CD4-positive, alpha-beta T cell (primary cell): ENCODE measurements at regions of chr10 and their contacts with region 1.

Region 1: DNA sequence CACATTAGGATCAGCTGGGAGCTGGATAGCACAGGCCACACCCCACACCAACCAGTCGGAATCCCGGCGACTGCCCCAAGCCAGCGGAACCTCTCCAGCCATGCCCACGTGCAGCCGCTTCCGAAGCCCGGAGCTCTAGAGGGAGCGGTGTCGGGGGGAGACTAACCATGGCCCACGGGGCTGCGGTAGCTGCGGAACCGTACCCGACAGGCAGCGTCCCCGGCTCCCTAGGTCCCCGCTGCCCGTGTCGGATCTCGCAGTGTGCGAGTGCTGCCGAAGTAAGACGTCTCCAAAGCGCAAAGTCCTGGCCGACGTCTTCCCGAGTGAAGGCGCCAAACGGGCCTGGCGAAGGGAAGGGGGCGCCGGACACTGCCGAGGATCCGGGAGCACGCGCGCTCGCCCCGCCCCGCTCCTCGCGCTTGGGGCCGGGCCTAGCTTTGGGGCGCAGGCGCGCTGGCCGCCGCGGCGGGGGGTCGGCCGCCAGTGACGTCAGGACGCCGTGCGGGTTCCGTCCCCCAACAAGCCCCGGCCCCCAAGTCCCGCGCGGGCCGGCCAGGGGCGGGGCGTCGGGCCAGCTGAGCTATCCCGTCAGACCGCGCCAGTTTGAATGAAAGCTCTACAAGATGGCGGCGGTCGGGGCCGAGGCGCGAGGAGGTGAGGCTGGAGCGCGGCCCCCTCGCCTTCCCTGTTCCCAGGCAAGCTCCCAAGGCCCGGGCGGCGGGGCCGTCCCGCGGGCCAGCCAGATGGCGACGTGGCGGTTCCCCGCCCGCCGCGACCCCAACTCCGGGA is at the start of gene SUV39H2:
- DNase-seq: peak; percentile 74 to 97 (median 90)
- ATAC-seq: peak; percentile 78
- H3K4me3 ChIP-seq: peak within 1 kb of the TSS; percentile 95
- H3K4me3 Mint-ChIP-seq: peak within 1 kb of the TSS; percentile 96
- H3K27ac ChIP-seq: peak within 1 kb of the TSS; percentile 39 to 53
- H3K27ac Mint-ChIP-seq: peak within 1 kb of the TSS; percentile 88
- H3K4me1 ChIP-seq: peaks cover 16% of the 10 kb centered on the region
- H3K4me1 Mint-ChIP-seq: peaks cover 48% of the 10 kb centered on the region
- H3K27me3 ChIP-seq: no peaks in the 10 kb centered on the region
- H3K27me3 Mint-ChIP-seq: no peaks in the 10 kb centered on the region
- CTCF ChIP-seq: no peak
- total RNA-seq, gene SUV39H2: 3.4 to 3.5 TPM

Region 2: GRCh38 chr10:14904316-14904732 is 25.9 kb after region 1 on chr10:
- CTCF ChIA-PET with region 1: interaction called, 3 read pairs
- POLR2A ChIA-PET with region 1: interaction called, 3 read pairs
- intact Hi-C with region 1: loop called in 1 of 2 experiments (anchors 2 kb)
- DNase-seq: peak in 6 of 14 experiments; percentile 5 to 58 (median 34)
- ATAC-seq: peak; percentile 80
- H3K4me3 ChIP-seq: no peak overlapping the region
- H3K4me3 Mint-ChIP-seq: no peak overlapping the region
- H3K27ac ChIP-seq: no peak overlapping the region
- H3K27ac Mint-ChIP-seq: no peak overlapping the region
- H3K4me1 ChIP-seq: no peaks in the 10 kb centered on the region
- H3K4me1 Mint-ChIP-seq: peaks cover 32% of the 10 kb centered on the region
- H3K27me3 ChIP-seq: no peaks in the 10 kb centered on the region
- H3K27me3 Mint-ChIP-seq: no peaks in the 10 kb centered on the region
- CTCF ChIP-seq: peak; percentile 69

Region 3: GRCh38 chr10:14954001-14954770 is 75.7 kb after region 1 on chr10 and contains the start of gene DCLRE1C:
- CTCF ChIA-PET with region 1: interaction called, 5 read pairs
- POLR2A ChIA-PET with region 1: interaction called, 16 read pairs
- intact Hi-C with region 1: loop called (anchors 2 to 5 kb)
- DNase-seq: peak; percentile 71 to 93 (median 80)
- ATAC-seq: peak; percentile 86
- H3K4me3 ChIP-seq: peak within 1 kb of the TSS; percentile 86
- H3K4me3 Mint-ChIP-seq: peak within 1 kb of the TSS; percentile 91
- H3K27ac ChIP-seq: peak within 1 kb of the TSS; percentile 82 to 91
- H3K27ac Mint-ChIP-seq: peak within 1 kb of the TSS; percentile 90
- H3K4me1 ChIP-seq: peaks cover 61% of the 10 kb centered on the region
- H3K4me1 Mint-ChIP-seq: peaks cover 66% of the 10 kb centered on the region
- H3K27me3 ChIP-seq: no peaks in the 10 kb centered on the region
- H3K27me3 Mint-ChIP-seq: no peaks in the 10 kb centered on the region
- CTCF ChIP-seq: no peak
- total RNA-seq, gene DCLRE1C: 11.0 to 15.4 TPM

Region 4: DNA sequence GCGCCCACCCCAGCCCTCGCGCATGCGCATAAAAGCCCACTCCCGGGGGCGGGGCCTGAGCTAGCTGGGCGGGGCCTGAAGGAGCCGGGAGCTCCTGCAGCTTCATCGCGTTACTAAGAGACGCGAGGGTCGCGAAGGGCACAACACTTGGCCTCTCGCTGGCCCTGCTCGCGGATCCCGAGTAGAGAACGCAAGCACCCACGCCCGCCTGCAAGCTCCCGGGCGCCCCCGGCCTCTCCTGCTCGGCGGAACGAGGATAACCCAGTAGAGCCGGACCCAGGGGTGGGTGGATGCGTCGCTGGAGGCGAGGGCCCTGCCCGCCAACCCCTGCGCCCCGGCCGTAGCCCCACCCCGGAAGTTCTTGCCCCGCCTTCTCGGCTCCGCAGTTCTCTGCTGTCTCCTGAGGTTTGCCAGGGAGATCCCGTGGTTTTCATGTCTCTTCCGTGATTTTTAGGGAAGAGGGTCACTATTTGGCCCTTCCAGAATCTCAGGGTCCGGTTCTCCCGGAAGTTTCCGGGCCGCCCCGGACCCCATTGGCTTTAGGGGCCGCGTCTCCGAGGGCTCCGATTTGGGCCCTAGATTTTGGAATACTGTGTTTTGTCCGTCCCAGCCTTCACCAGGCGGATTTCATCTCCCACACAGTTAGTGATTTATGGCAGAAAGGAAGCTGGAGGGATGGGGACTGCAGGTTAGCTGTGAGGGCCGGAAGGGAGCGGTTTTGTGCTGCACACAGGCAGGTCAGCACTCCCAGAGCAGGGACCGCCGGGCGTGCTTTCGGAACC is 81.0 kb after region 1 on chr10 and contains the start of gene MEIG1:
- CTCF ChIA-PET with region 1: no interaction called
- POLR2A ChIA-PET with region 1: interaction called, 16 read pairs
- intact Hi-C with region 1: loop called (anchors 2 to 5 kb)
- DNase-seq: peak; percentile 83 to 96 (median 88)
- ATAC-seq: peak; percentile 85
- H3K4me3 ChIP-seq: peak within 1 kb of the TSS; percentile 83
- H3K4me3 Mint-ChIP-seq: peak within 1 kb of the TSS; percentile 98
- H3K27ac ChIP-seq: peak within 1 kb of the TSS; percentile 86 to 92
- H3K27ac Mint-ChIP-seq: peak within 1 kb of the TSS; percentile 98
- H3K4me1 ChIP-seq: peaks cover 30% of the 10 kb centered on the region
- H3K4me1 Mint-ChIP-seq: peaks cover 34% of the 10 kb centered on the region
- H3K27me3 ChIP-seq: no peaks in the 10 kb centered on the region
- H3K27me3 Mint-ChIP-seq: no peaks in the 10 kb centered on the region
- CTCF ChIP-seq: no peak
- total RNA-seq, gene MEIG1: not detected

Region 5: GRCh38 chr10:15097011-15097812 is 218.8 kb after region 1 on chr10 and contains the start of gene RPP38:
- CTCF ChIA-PET with region 1: no interaction called
- POLR2A ChIA-PET with region 1: interaction called, 4 read pairs
- intact Hi-C with region 1: loop called in 1 of 2 experiments (anchors 2 kb)
- DNase-seq: peak; percentile 89 to 97 (median 92)
- ATAC-seq: peak; percentile 80
- H3K4me3 ChIP-seq: peak within 1 kb of the TSS; percentile 80
- H3K4me3 Mint-ChIP-seq: peak within 1 kb of the TSS; percentile 95
- H3K27ac ChIP-seq: peak within 1 kb of the TSS; percentile 89 to 95
- H3K27ac Mint-ChIP-seq: peak within 1 kb of the TSS; percentile 97
- H3K4me1 ChIP-seq: peaks cover 43% of the 10 kb centered on the region
- H3K4me1 Mint-ChIP-seq: peaks cover 38% of the 10 kb centered on the region
- H3K27me3 ChIP-seq: no peaks in the 10 kb centered on the region
- H3K27me3 Mint-ChIP-seq: no peaks in the 10 kb centered on the region
- CTCF ChIP-seq: no peak
- total RNA-seq, gene RPP38: 12.9 to 14.9 TPM